A673 (cell line): ENCODE measurements at regions of chr1 and their contacts with region 1.

Region 1: GRCh38 chr1:18542351-18542750 is 61.6 kb downstream of the KLHDC7A start:
- DNase-seq: no peak
- H3K4me3 ChIP-seq: no peak overlapping the region
- H3K27ac ChIP-seq: no peak overlapping the region
- H3K4me1 ChIP-seq: no peaks in the 10 kb centered on the region
- H3K27me3 ChIP-seq: no peaks in the 10 kb centered on the region
- CTCF ChIP-seq: no peak

Region 2: DNA sequence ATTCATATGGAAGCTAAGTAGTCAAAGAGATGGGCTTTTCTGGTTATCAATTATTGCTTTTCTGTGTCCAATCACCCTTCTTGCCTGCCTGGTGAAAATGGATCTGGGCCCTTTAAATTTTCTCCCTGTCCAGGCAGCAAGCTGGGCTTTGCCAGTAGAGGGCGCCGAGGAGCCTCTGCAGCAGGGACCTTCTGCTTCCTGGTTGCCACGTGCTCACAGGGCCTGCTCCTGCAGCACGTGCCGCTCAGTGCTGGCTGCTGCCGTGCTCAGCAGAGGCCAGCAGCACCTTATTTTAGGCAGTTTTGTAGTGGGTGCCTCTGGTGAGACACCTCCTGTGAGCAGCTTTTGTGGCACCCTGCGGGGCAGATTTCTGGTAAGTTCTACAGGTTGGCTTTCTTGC is 783.2 kb before region 1 on chr1:
- CTCF ChIA-PET with region 1: no interaction called
- POLR2A ChIA-PET with region 1: interaction called, 11 read pairs
- intact Hi-C with region 1: no loop called
- DNase-seq: peak; percentile 24
- H3K4me3 ChIP-seq: no peak overlapping the region
- H3K27ac ChIP-seq: no peak overlapping the region
- H3K4me1 ChIP-seq: no peaks in the 10 kb centered on the region
- H3K27me3 ChIP-seq: no peaks in the 10 kb centered on the region
- CTCF ChIP-seq: peak; percentile 46